Naive thymus-derived CD4-positive, alpha-beta T cell (primary cell): ENCODE measurements at regions of chr1 and their contacts with region 1.

Region 1: DNA sequence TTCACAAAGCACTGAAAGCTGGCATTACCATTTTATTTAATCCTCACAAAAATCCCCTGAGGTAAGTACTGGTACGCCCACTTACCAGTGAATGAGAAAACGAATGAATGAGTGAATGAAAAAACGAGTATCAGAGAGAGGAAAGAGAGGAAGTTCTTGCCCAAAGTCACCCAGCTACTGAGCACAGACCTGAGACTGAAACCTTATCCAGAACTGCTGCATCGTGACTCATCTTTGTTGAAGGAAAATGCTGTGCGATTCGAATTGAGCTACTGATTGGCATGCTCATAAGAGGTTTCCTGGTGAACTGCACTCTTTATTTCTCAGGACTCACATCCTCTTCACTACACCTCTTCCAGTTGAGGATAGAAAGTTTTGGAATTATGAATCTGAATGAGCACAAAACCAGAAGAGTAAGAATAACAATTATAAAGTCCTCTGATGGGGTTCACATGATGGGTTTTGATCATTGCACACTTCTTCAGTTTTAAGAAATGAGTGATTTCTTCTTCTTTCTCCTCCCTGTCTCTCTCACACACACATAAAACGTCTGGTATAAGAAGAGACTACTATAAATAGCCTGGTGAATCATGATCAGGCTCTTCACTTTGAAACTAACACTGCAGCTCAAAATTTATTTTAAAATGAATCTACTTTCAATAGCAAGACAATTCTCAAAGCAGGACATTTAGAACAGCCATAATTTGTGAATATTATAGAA is 32.1 kb downstream of the IL12RB2 start:
- DNase-seq: peak in 1 of 9 donors; percentile 41
- ATAC-seq: no peak
- H3K4me3 ChIP-seq: no peak overlapping the region
- H3K4me3 Mint-ChIP-seq: peak overlapping the region in 3 of 10 donors; percentile 1 to 61 (median 35)
- H3K27ac ChIP-seq: no peak overlapping the region
- H3K27ac Mint-ChIP-seq: peak overlapping the region in 1 of 9 donors; percentile 81
- H3K4me1 ChIP-seq: peaks cover 11 to 24% of the 10 kb centered on the region in 2 donors
- H3K4me1 Mint-ChIP-seq: peaks cover 30 to 81% (median 62%) of the 10 kb centered on the region in 7 donors
- H3K27me3 ChIP-seq: no peaks in the 10 kb centered on the region
- H3K27me3 Mint-ChIP-seq: no peaks in the 10 kb centered on the region

Region 2: DNA sequence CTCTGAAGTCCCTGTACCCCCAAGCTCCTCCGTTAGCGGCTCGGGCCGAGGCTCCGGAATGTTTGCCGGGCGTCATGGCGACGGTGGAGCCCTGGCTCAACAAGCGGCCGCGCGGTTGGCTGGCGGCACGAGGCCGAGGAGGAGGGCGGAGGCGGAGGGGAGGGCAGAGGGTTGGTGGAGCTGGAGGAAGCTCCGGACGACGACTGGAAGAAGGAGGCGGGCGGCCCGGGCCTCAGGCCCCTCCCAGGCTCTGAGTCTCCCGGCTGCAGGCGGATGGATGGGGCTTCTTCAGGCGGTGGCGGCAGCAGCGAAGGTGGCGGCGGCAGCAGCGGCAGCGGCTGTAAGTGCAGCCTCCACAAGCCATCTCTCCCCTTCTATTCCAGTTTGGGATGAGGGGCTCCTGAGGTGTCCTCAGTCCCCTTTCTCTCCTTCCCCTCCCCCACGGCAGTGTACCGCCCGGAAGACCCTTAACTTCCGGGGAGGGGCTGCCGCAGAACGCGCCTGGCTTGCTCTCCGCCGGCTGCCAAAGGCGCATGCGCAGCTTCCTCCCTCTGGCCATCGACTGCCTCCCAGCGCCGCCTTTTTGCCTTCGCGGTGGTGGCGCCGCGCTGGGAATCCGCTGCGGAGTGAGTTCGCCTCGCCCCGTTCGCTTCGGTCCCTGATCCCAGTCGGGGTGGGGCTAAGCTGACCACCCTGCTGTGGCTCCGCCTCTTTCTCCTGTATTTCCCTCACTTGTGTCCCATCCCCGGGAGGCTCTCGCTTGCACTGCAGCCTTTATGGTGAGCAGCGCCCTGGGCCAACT is 414.8 kb before region 1 on chr1 and contains the starts of genes DNAI4 and MIER1:
- CTCF ChIA-PET with region 1: no interaction called
- POLR2A ChIA-PET with region 1: no interaction called
- intact Hi-C with region 1: loop called in 1 of 2 experiments (anchors 10 kb)
- DNase-seq: peak; percentile 91 to 98 (median 96)
- ATAC-seq: peak; percentile 97
- H3K4me3 ChIP-seq: peak within 1 kb of the TSS; percentile 83
- H3K4me3 Mint-ChIP-seq: peak within 1 kb of the TSS; percentile 92 to 98 (median 96)
- H3K27ac ChIP-seq: peak within 1 kb of the TSS; percentile 95
- H3K27ac Mint-ChIP-seq: peak within 1 kb of the TSS; percentile 95 to 97 (median 97)
- H3K4me1 ChIP-seq: peaks cover 24 to 37% of the 10 kb centered on the region in 2 donors
- H3K4me1 Mint-ChIP-seq: peaks cover 18 to 75% (median 60%) of the 10 kb centered on the region in 7 donors
- H3K27me3 ChIP-seq: no peaks in the 10 kb centered on the region
- H3K27me3 Mint-ChIP-seq: no peaks in the 10 kb centered on the region
- total RNA-seq, gene DNAI4: 1.3 to 10.7 (median 9.7) TPM
- total RNA-seq, gene MIER1: 51.5 to 73.6 (median 70.9) TPM

Region 3: GRCh38 chr1:67097305-67097704 is 242.5 kb before region 1 on chr1:
- CTCF ChIA-PET with region 1: no interaction called
- POLR2A ChIA-PET with region 1: no interaction called
- intact Hi-C with region 1: no loop called
- DNase-seq: no peak
- ATAC-seq: no peak
- H3K4me3 ChIP-seq: no peak overlapping the region
- H3K4me3 Mint-ChIP-seq: no peak overlapping the region
- H3K27ac ChIP-seq: no peak overlapping the region
- H3K27ac Mint-ChIP-seq: peak overlapping the region in 1 of 9 donors; percentile 15
- H3K4me1 ChIP-seq: no peaks in the 10 kb centered on the region
- H3K4me1 Mint-ChIP-seq: peaks cover 0 to 15% (median 8%) of the 10 kb centered on the region in 7 donors
- H3K27me3 ChIP-seq: no peaks in the 10 kb centered on the region
- H3K27me3 Mint-ChIP-seq: peaks cover 0 to 11% (median 3%) of the 10 kb centered on the region in 5 donors

Region 4: GRCh38 chr1:67261680-67262079 is 78.1 kb before region 1 on chr1:
- CTCF ChIA-PET with region 1: no interaction called
- POLR2A ChIA-PET with region 1: no interaction called
- intact Hi-C with region 1: loop called in 1 of 2 experiments (anchors 2 kb)
- DNase-seq: peak in 8 of 9 donors; percentile 24 to 67 (median 57)
- ATAC-seq: peak; percentile 52
- H3K4me3 ChIP-seq: no peak overlapping the region
- H3K4me3 Mint-ChIP-seq: peak overlapping the region in 7 of 10 donors; percentile 17 to 73 (median 34)
- H3K27ac ChIP-seq: no peak overlapping the region
- H3K27ac Mint-ChIP-seq: peak overlapping the region in 1 of 9 donors; percentile 8
- H3K4me1 ChIP-seq: peaks cover 17 to 22% of the 10 kb centered on the region in 2 donors
- H3K4me1 Mint-ChIP-seq: peaks cover 12 to 44% (median 31%) of the 10 kb centered on the region in 7 donors
- H3K27me3 ChIP-seq: no peaks in the 10 kb centered on the region
- H3K27me3 Mint-ChIP-seq: no peaks in the 10 kb centered on the region